H1 (cell line): ENCODE measurements at regions of chr14 and their contacts with region 1.

Region 1: DNA sequence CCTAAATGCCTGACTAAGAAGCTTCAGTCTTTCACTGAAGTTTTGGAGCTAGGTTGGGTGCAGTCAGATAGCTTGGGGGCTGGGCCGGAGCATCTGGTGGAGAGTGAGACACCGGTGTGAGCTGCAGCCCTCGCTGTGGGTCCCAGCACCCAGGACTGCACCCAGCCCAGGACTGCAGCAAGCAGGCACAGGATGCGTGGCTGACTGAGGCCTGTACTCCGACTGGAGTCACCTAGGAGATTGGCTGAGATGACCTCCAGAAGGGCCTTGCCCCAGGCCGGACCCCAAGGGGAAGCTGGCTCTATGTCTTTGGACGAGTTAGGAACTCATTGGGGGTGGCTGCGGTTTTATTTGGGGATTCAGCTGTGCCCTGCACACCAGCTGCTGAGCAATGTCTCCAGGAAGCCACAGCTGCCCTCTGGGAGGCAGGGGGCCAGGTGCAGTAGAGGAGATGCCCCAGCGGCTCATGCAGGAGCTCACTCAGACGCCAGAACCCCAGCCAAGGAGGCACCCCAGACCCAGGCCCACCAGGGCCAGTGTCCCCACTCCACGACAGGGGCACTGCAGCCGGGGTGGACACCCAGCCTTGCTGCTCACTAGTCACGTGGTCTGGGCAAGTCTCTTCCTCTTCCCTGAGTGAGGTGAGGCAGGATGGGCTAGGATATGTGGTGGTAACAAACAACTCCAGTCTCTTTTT is 31.8 kb upstream of the RCOR1 start:
- DNase-seq: no peak
- H3K4me3 ChIP-seq: no peak overlapping the region
- H3K27ac ChIP-seq: no peak overlapping the region
- H3K4me1 ChIP-seq: no peaks in the 10 kb centered on the region
- H3K27me3 ChIP-seq: no peaks in the 10 kb centered on the region
- CTCF ChIP-seq: no peak
- EP300 ChIP-seq: no peak
- POLR2A ChIP-seq: no peak
- RAD21 ChIP-seq: no peak

Region 2: DNA sequence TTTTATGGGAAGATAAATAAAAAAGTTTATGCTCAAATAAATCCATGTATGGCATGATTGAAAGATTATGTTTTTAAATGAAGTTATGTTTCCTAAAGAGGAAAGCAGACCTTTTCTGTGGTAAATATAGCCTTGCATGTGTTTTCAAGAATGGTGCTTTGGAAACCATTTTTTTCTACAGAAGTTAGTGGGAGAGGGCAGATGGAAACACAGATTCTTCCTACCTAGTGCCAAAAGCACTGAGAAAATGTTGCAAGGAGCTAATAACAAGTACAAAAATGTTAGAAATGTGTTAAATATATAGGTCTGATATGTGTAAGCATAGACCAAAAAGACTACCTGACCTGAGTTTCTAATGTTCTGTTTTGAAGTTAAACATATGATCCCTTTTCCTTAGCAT is 173.5 kb before region 1 on chr14:
- CTCF ChIA-PET with region 1: no interaction called
- POLR2A ChIA-PET with region 1: no interaction called
- DNase-seq: no peak
- H3K4me3 ChIP-seq: no peak overlapping the region
- H3K27ac ChIP-seq: no peak overlapping the region
- H3K4me1 ChIP-seq: peaks cover 0 to 2% (median 0%) of the 10 kb centered on the region in 4 experiments; a peak in 1 of 7 replicates
- H3K27me3 ChIP-seq: no peaks in the 10 kb centered on the region
- CTCF ChIP-seq: no peak
- EP300 ChIP-seq: no peak
- POLR2A ChIP-seq: no peak
- RAD21 ChIP-seq: no peak

Region 3: GRCh38 chr14:102545461-102546265 is 14.9 kb before region 1 on chr14:
- CTCF ChIA-PET with region 1: interaction called, 3 read pairs
- POLR2A ChIA-PET with region 1: interaction called, 50 read pairs
- DNase-seq: peak in 1 of 2 experiments; percentile 73
- H3K4me3 ChIP-seq: peak overlapping the region; percentile 19 to 53 (median 26); a peak in 7 of 8 replicates
- H3K27ac ChIP-seq: peak overlapping the region; percentile 25; the same call in 1 of the 2 replicates
- H3K4me1 ChIP-seq: peaks cover 3 to 19% (median 10%) of the 10 kb centered on the region in 4 experiments
- H3K27me3 ChIP-seq: peaks cover 0 to 7% (median 4%) of the 10 kb centered on the region in 4 experiments; a peak in 3 of 7 replicates
- CTCF ChIP-seq: no peak
- EP300 ChIP-seq: no peak
- POLR2A ChIP-seq: peak in 1 of 2 experiments; percentile 26; a peak in 1 of 3 replicates
- RAD21 ChIP-seq: peak in 1 of 2 experiments; percentile 0; a peak in 1 of 4 replicates

Region 4: GRCh38 chr14:102573591-102574046 is 13.0 kb after region 1 on chr14:
- CTCF ChIA-PET with region 1: interaction called, 18 read pairs
- POLR2A ChIA-PET with region 1: interaction called, 6 read pairs
- DNase-seq: no peak
- H3K4me3 ChIP-seq: no peak overlapping the region
- H3K27ac ChIP-seq: no peak overlapping the region
- H3K4me1 ChIP-seq: peaks cover 0 to 4% (median 1%) of the 10 kb centered on the region in 4 experiments; a peak in 3 of 7 replicates
- H3K27me3 ChIP-seq: no peaks in the 10 kb centered on the region
- CTCF ChIP-seq: no peak
- EP300 ChIP-seq: no peak
- POLR2A ChIP-seq: no peak
- RAD21 ChIP-seq: no peak